ENCODE measurements at regions of chr1 and their contacts with region 1.

Region 1: GRCh38 chr1:18091660-18092446 is 15.7 kb upstream of the IGSF21 start:
- DNase-seq: no peak
- H3K4me3 ChIP-seq: no peak overlapping the region
- H3K27ac ChIP-seq: no peak overlapping the region
- H3K4me1 ChIP-seq: no peaks in the 10 kb centered on the region
- H3K27me3 ChIP-seq: peaks cover 0 to 95% (median 0%) of the 10 kb centered on the region in 4 donors
- CTCF ChIP-seq: no peak
- POLR2A ChIP-seq: no peak

Region 2: GRCh38 chr1:17661546-17662157 is 430.2 kb before region 1 on chr1:
- intact Hi-C with region 1: loop called (anchors 10 kb)
- DNase-seq: no peak
- H3K4me3 ChIP-seq: no peak overlapping the region
- H3K27ac ChIP-seq: no peak overlapping the region
- H3K4me1 ChIP-seq: no peaks in the 10 kb centered on the region
- H3K27me3 ChIP-seq: no peaks in the 10 kb centered on the region
- CTCF ChIP-seq: peak; percentile 64 to 82 (median 73)
- POLR2A ChIP-seq: no peak

Measured in esophagus squamous epithelium (tissue), 5 donors.